Activated B cell treated with CpG ODN at 0.5 μM for 24 hours (primary cell): ENCODE measurements at regions of chr20 and their contacts with region 1.

Region 1: DNA sequence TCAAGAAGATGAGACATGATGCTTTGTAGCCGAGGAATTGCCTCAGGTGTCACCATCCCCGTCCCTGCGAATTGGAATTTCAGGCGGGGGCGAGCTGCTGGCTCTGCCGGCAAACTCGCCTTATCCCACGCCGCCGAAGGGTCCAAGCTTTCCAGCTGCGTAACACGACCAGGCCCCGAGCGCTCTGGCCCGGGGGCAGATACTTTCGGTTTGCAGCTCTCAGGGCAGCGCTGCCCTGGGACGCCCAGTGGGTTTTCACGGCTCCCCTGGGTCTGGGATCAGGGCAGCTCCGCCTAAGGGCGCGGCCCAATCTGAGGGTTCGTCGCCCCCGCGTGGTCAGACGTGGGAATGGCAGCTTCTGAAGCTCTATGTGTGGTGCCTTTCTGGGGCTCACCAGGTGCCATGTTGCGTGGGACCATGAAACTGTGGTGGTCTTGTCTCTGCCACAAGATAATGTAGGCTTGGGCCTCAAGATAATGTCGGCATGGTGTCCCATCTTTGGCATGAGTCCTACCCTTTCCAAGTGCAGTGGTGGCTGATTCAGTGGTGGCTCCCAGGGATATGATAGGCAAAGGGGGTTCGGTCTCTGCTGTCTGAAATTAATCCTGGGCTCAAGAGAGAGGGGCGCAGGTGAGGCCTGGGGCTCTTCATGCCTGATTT is 20.9 kb downstream of the PIGT start:
- DNase-seq: peak; percentile 84
- ATAC-seq: peak; percentile 91
- H3K4me3 Mint-ChIP-seq: peak overlapping the region; percentile 86
- H3K27ac Mint-ChIP-seq: peak overlapping the region; percentile 68
- H3K4me1 Mint-ChIP-seq: peaks cover 39% of the 10 kb centered on the region
- H3K27me3 Mint-ChIP-seq: no peaks in the 10 kb centered on the region
- CTCF ChIP-seq: peak; percentile 60

Region 2: DNA sequence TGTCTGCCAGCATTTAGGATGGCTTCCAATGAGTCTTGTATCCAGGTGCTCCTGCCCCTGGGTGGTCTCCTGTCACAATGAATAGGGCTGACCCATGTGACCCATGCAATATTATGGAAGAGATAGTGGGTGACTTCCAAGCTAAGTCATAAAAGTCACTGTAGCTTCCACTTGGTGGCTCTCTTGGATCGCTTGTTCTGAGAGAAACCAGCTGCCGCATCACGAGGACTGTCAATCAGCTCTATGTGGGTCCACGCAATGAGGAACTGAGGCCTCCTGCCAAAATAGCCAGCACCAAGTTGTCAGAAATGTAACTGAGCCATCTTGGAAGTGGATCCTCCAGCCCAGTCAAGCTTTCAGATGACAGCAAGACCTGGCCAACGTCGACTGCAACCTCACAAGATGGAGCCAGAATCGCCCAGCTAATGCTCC is 113.9 kb before region 1 on chr20:
- CTCF ChIA-PET with region 1: interaction called, 45 read pairs
- POLR2A ChIA-PET with region 1: interaction called, 5 read pairs
- intact Hi-C with region 1: loop called (anchors 1 kb)
- DNase-seq: no peak
- ATAC-seq: peak; percentile 19
- H3K4me3 Mint-ChIP-seq: no peak overlapping the region
- H3K27ac Mint-ChIP-seq: no peak overlapping the region
- H3K4me1 Mint-ChIP-seq: peaks cover 37% of the 10 kb centered on the region
- H3K27me3 Mint-ChIP-seq: no peaks in the 10 kb centered on the region
- CTCF ChIP-seq: no peak

Region 3: DNA sequence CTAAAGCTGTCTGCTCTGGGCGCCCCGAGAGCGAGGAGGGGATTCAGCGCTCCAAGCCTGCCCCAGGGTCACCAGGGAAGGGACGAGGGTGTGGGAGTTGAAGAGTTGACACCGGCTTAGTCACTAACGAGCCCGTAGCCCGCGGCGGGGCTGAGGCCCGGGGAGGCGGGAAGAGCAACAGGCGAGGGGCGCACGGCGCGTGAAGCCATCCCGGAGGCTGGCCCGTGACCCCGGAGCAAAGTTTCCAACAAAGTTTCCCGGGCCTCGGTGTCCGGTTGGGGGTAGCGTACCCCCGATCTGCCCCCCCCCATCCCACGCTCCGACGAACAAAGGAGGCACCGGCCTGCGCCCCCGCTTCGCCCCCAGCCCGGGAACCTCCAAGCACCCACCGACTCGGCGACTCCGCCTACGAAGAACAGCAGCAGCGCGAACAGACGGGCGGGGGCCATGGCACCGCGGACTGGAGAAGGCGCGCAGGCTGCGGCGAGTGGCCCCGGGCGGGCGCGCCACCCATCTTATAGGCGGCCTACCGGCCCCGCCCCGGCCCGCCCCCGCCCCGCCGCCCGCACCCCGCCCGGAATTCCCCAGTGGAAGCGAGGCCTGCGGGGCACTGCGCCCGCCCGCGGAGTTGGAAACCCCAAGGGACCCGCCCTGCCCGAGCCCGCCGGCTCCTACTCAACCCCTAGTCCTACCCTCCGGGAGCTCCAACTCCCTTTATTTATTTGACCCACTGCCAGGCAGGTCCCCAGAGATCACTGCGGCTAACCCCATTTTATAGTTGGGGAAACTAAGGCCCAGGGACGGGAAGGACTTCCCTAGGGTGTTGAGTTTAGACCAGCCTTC is 88.7 kb before region 1 on chr20 and contains the start of gene SDC4:
- CTCF ChIA-PET with region 1: no interaction called
- POLR2A ChIA-PET with region 1: no interaction called
- intact Hi-C with region 1: no loop called
- DNase-seq: no peak
- ATAC-seq: peak; percentile 75
- H3K4me3 Mint-ChIP-seq: peak within 1 kb of the TSS; percentile 68
- H3K27ac Mint-ChIP-seq: no peak within 1 kb of the TSS
- H3K4me1 Mint-ChIP-seq: peaks cover 11% of the 10 kb centered on the region
- H3K27me3 Mint-ChIP-seq: peaks cover 21% of the 10 kb centered on the region
- CTCF ChIP-seq: no peak
- total RNA-seq, gene SDC4: not detected in 2 replicates

Region 4: GRCh38 chr20:45368221-45368980 is 68.5 kb before region 1 on chr20:
- CTCF ChIA-PET with region 1: interaction called, 534 read pairs
- POLR2A ChIA-PET with region 1: interaction called, 74 read pairs
- intact Hi-C with region 1: loop called (anchors 1 kb)
- DNase-seq: peak; percentile 52
- ATAC-seq: peak; percentile 82
- H3K4me3 Mint-ChIP-seq: peak overlapping the region; percentile 77
- H3K27ac Mint-ChIP-seq: peak overlapping the region; percentile 86
- H3K4me1 Mint-ChIP-seq: peaks cover 91% of the 10 kb centered on the region
- H3K27me3 Mint-ChIP-seq: no peaks in the 10 kb centered on the region
- CTCF ChIP-seq: no peak

Region 5: DNA sequence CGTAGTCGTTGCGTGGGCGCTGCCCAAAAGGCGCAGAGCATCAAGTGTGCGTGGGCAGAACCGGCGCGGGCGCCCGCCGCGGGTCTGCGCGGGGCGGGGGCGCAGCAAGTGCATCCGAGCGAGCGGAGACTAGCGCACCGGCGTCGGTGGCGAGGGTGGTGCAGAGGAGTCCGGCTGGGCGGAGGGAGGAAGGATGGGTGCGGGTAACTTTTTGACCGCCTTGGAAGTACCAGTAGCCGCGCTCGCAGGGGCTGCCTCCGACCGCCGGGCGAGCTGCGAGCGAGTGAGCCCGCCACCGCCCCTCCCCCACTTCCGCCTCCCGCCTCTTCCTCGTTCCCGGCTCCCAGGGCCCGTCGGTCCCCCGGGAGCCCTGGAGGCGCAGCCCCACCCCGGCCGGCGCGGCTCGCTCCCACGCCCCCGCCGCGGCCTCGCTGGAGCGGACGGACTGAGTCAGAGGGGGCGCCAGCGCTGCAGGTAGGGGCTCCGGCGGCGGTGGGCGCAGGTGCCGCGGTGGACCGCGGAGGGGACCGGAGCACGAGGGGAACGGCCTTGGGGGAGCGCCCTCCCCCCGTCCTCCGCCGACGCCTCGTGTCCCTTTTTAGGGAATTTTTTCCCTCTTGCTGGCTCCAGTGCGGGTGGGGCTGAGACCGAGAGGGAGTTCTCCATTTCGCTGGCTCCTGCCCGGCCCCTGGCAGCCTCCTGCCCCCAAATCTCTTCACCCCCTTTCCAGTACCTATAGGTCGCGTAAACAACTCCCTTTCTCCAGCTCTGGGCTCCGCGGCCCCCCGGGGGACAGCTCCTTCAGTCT is 30.4 kb before region 1 on chr20:
- CTCF ChIA-PET with region 1: interaction called, 13 read pairs
- POLR2A ChIA-PET with region 1: no interaction called
- intact Hi-C with region 1: no loop called
- DNase-seq: peak; percentile 48
- ATAC-seq: peak; percentile 60
- H3K4me3 Mint-ChIP-seq: peak overlapping the region; percentile 75
- H3K27ac Mint-ChIP-seq: no peak overlapping the region
- H3K4me1 Mint-ChIP-seq: peaks cover 28% of the 10 kb centered on the region
- H3K27me3 Mint-ChIP-seq: no peaks in the 10 kb centered on the region
- CTCF ChIP-seq: no peak

Region 6: DNA sequence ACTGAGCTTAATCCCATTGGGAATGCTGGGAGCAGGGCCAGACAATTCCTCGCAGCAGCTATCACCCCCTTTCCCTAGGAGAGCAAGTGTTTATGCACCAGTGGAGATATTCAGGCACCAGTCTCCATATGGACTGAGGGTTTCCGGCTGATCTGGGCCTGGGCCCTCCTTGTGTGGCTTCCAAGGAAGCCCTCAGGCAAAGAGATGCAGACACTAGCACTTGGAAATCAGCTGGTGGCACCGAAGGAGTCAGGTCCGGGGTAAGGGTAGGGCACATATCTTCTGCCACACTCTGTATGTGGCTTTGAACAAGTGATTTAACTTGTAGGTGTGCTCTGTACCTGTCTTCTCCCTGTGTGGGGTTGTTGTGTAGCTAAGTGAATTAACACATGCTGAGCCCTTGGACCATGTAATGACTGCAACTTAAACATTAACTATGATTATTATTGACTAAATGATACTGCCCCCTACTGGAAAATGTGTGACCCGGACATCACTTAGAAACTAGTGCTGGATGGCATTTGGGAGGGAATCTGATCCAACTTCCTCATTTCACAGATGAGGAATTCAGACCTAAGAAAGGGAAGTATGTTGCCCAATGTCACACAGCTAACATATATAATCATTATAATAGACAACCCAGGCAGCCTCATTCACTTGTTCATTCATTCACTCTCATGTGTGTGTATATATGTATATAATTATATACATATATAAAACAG is 13.4 kb after region 1 on chr20:
- CTCF ChIA-PET with region 1: interaction called, 20 read pairs
- POLR2A ChIA-PET with region 1: interaction called, 3 read pairs
- intact Hi-C with region 1: no loop called
- DNase-seq: no peak
- ATAC-seq: peak; percentile 46
- H3K4me3 Mint-ChIP-seq: no peak overlapping the region
- H3K27ac Mint-ChIP-seq: no peak overlapping the region
- H3K4me1 Mint-ChIP-seq: peaks cover 19% of the 10 kb centered on the region
- H3K27me3 Mint-ChIP-seq: peaks cover 2% of the 10 kb centered on the region
- CTCF ChIP-seq: peak; percentile 56

Region 7: GRCh38 chr20:45487231-45487635 is 50.4 kb after region 1 on chr20:
- CTCF ChIA-PET with region 1: no interaction called
- POLR2A ChIA-PET with region 1: no interaction called
- intact Hi-C with region 1: no loop called
- DNase-seq: no peak
- ATAC-seq: no peak
- H3K4me3 Mint-ChIP-seq: no peak overlapping the region
- H3K27ac Mint-ChIP-seq: no peak overlapping the region
- H3K4me1 Mint-ChIP-seq: no peaks in the 10 kb centered on the region
- H3K27me3 Mint-ChIP-seq: peaks cover 26% of the 10 kb centered on the region
- CTCF ChIP-seq: no peak